Esophagus squamous epithelium (tissue), 5 donors: ENCODE measurements at regions of chr2 and their contacts with region 1.

Region 1: DNA sequence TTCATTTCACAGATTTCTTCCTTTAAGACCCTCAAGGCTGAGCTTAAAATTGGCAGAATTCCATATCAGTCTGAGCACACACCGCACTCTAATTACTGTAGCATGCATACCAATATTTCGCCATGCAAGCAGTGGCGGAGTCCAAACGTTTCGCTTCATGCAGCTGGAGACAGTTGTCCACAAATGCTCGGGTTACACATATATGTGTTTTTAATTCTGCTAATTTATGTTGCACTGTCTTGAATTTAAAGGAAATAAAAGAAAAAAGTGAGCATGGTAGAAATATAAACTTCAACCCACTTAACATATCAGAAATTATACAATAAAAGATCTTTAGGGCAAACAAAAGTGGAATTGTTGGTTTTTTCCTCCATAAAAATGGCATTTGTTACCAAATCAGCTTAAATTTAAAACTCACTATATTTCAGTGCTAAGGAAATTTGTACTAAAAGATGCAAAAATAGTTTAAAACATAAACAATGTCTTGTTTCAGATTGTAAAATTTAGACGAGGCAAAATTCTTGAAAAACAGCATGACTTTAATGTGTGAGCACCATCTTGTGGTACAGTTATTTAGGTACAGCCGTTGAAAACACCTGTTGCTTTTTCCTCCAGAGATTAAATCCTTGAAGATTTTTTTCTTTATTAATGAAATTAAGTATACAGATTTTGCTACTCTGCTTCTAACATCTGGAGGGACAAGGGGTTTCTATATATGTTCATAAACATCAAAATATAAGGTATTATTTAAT is 24.1 kb upstream of the KANSL1L start:
- DNase-seq: no peak
- H3K4me3 ChIP-seq: peak overlapping the region in 1 of 4 donors; percentile 43
- H3K27ac ChIP-seq: no peak overlapping the region
- H3K4me1 ChIP-seq: peaks cover 0 to 3% (median 3%) of the 10 kb centered on the region in 3 donors
- H3K27me3 ChIP-seq: no peaks in the 10 kb centered on the region
- CTCF ChIP-seq: peak; percentile 24 to 74 (median 66)
- POLR2A ChIP-seq: no peak

Region 2: DNA sequence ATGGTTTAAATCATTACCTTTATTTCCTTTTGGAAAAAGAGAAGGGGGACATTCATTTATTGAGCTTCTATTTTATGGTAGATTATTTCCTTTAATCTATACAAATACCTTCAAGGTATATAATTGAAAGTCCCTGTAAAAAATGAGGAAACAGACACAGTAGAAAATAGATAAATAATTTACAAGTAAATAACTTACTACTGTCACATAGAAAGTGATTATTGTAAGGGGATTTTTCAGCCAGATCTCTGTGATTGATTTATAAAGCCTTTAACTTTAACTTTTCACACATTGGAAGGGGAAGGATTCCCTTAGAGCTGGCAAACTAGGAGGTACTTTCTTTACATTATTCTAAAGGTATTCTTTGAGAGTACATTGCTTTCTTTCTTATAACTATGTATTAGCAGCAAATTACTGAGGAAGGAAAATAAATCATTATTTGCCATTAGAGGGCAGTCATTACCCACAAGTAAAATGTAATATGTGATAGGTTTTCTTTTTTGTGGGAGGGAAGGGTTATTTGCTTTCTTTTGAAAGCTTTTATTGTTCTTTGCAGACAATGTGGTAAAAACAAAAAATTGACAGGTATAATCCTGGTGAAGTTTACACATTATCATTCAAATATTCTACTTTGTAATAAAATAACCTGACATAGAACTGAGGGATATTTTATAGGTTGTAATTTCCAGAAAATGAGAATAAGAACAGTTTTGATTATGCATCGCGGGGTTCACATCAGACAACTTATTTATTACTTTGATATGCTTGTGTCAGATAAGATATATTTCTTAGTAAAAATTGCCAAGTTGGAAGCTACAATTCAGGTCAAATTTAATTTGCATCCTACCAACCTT is 217.7 kb before region 1 on chr2:
- intact Hi-C with region 1: loop called (anchors 5 kb)
- DNase-seq: no peak
- H3K4me3 ChIP-seq: no peak overlapping the region
- H3K27ac ChIP-seq: no peak overlapping the region
- H3K4me1 ChIP-seq: no peaks in the 10 kb centered on the region
- H3K27me3 ChIP-seq: peaks cover 0 to 5% (median 0%) of the 10 kb centered on the region in 4 donors
- CTCF ChIP-seq: peak; percentile 23 to 65 (median 60)
- POLR2A ChIP-seq: no peak

Region 3: DNA sequence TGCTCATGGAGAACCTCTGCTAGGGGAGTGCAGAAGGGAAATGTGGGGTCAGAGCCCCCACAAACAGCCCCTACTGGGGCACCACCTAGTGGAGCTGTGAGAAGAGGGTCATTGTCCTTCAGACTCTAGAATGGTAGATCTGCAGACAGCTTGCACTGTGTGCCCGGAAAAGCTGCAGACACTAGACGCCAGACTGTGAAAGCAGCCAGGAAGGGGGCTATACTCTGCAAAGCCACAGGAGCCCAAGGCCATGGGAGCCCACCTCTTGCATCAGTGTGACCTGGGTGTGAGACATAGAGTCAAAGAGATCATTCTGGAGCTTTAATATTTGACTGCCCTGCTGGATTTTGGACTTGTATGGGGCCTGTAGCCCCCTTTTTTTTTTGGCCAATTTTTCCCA is 132.0 kb before region 1 on chr2:
- intact Hi-C with region 1: loop called (anchors 10 kb)
- DNase-seq: no peak
- H3K4me3 ChIP-seq: no peak overlapping the region
- H3K27ac ChIP-seq: no peak overlapping the region
- H3K4me1 ChIP-seq: no peaks in the 10 kb centered on the region
- H3K27me3 ChIP-seq: no peaks in the 10 kb centered on the region
- CTCF ChIP-seq: no peak
- POLR2A ChIP-seq: no peak